OCI-LY7 (cell line): ENCODE measurements at regions of chr7 and their contacts with region 1.

Region 1: GRCh38 chr7:107879400-107880035 is 11.5 kb upstream of the DLD start:
- DNase-seq: peak; percentile 63
- H3K4me3 ChIP-seq: no peak overlapping the region
- H3K27ac ChIP-seq: no peak overlapping the region
- H3K4me1 ChIP-seq: no peaks in the 10 kb centered on the region
- CTCF ChIP-seq: peak; percentile 97

Region 2: DNA sequence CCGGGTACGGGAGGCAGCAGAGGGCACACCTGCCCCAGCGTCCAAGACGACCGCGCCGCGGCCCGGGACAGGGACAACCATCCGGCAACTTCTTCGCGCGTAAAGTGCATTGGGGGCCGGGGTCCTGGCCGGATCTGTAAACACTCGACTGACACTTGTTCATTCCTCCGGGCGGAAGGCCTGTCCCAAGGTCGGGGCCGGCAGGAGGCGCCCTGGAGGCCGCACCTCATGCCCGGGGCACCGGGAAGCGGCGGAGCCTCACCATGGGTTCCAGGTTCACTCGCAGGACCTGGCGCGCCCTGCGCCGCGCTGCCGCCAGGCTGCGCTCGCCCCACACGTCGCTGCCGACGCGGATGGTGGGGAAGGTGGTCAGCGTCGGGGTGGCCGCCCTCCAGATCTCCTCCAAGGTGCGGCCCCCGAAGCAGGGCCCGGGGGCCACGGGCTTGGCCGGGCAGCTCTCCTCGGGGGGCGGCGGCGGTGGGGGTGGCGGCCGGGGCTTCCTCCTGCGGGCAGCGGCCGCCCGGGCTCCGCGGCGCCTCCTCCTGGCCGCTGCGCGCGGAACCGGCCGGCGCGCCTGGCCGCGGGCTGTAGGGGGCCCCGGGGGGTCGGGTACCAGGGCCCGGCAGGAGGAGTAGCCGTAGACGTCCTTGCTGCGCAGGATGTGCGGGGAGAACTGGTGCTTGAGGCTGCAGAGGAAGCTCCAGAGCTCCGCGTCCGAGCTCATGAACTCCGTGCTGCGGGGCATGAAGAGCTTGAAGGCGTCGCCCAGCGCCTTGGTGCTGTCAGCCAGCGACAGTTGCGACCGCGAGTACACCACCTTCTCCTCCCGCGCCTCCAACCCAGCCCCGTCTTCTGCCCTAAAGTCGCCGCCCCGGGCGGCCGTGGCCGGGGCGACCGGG is 1219.3 kb before region 1 on chr7:
- CTCF ChIA-PET with region 1: no interaction called
- POLR2A ChIA-PET with region 1: no interaction called
- intact Hi-C with region 1: loop called (anchors 10 kb)
- DNase-seq: peak; percentile 89
- H3K4me3 ChIP-seq: peak overlapping the region; percentile 82
- H3K27ac ChIP-seq: peak overlapping the region; percentile 70
- H3K4me1 ChIP-seq: peaks cover 9% of the 10 kb centered on the region
- CTCF ChIP-seq: peak; percentile 83

Region 3: GRCh38 chr7:106947244-106947728 is 932.2 kb before region 1 on chr7:
- CTCF ChIA-PET with region 1: no interaction called
- POLR2A ChIA-PET with region 1: no interaction called
- intact Hi-C with region 1: loop called (anchors 10 kb)
- DNase-seq: peak; percentile 92
- H3K4me3 ChIP-seq: no peak overlapping the region
- H3K27ac ChIP-seq: no peak overlapping the region
- H3K4me1 ChIP-seq: peaks cover 18% of the 10 kb centered on the region
- CTCF ChIP-seq: peak; percentile 99

Region 4: DNA sequence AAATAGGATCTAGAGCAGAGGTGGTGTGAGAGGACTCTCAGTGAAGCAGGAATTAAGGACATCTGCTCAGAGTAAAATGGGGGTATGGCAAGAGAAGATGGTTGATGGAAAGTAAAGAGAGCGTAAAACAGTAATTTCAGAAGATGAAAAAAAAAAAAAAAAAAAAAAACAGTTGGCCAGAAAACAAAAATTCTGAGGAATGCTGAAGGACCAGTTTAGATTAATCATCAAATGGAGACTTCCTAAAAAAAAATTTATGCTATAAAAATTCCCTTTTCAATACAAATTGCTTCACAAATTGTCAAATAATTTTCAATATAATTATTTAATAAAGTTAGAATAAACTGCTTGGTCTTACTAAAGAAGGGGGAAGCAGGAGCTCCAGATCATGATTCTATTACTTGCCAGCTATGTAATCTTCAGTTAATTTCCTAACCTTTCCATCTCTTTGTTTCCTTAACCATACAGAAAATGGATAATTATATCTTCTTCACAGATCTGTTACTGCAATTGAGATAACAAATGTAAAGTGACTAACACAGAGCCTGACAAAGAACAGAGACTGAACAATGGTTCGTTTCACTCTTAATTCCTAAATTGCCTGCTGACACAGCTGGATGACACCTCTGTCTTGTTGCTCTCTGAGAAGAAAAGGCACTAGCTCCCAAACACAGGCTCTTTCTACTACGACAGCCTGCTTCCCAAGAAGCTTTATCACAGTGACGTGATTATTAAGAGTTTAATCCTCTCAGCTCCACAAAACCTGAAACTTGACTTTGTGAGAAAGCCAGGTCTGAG is 474.6 kb before region 1 on chr7:
- CTCF ChIA-PET with region 1: no interaction called
- POLR2A ChIA-PET with region 1: no interaction called
- intact Hi-C with region 1: no loop called
- DNase-seq: no peak
- H3K4me3 ChIP-seq: no peak overlapping the region
- H3K27ac ChIP-seq: no peak overlapping the region
- H3K4me1 ChIP-seq: no peaks in the 10 kb centered on the region
- CTCF ChIP-seq: no peak

Region 5: DNA sequence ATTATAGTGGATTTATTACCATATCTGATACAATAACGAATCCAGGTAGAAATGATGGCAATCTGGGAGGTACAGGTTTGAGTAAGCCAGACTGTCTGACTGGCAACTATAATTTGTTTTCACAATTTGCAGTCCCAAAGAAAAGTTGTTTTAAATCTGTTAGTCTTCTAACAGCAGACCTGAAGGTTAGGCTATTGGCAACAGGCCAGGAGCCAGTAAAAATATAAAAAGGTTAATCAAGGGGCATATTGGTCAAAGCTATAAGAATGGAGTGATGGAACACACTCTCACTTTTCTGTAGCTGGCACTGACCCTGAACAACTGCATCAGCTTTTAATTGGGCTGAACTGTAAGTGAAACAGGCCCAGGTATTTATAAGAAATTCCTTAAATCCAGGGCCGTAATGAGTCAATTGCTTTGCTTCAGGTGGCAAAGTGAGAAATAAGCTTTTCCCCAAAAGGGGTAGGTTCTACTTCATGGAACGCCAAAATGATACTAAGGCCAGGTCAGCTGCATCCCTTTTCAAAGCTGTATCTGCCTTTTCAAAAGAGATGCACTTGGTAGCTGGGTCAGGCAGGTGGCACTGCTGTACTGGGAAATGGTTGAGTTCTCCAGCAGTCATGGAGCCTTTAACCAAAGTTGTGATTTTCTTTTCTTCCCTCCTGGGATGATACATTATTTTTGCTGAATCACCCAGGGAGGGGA is 416.6 kb before region 1 on chr7:
- CTCF ChIA-PET with region 1: interaction called, 3 read pairs
- POLR2A ChIA-PET with region 1: interaction called, 3 read pairs
- intact Hi-C with region 1: loop called (anchors 5 kb)
- DNase-seq: peak; percentile 52
- H3K4me3 ChIP-seq: no peak overlapping the region
- H3K27ac ChIP-seq: no peak overlapping the region
- H3K4me1 ChIP-seq: no peaks in the 10 kb centered on the region
- CTCF ChIP-seq: peak; percentile 82

Region 6: DNA sequence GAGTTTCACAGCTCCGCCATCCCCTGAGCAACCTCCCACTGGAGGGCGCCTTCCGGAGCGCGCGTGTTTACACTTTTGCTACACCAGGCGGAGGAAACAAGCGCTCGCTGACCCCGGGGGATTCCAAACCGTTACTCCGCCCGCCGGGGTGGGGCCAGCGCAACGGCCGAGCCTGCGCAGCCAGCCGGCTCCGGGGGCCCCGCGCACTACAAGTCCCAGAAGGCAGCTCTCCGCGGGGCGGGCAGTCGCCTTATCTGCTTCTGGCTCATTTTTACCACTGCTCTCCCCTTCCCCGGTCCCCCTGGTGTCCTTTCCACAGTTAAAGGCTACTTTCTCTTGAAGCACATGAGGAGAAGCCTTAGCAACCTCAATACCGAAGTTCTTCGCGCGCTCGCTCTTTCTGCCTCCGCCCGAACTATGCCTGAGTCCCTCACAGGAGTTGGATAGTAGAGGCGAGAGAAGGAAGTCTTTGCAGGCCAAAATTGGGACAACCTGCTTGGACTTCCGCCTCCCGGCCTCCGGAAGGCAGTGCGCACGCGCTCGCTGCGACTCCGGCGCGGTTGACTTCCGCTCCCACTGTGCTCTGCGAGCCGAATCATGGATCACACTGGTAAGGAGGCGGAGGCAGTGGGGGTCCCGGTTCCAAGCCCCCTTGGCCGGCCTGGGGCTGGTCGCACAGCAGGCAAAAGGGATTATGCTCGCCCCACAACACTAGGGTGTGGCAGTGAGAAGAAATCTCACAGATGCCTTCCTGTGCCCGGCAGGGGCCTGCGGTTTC is 135.8 kb before region 1 on chr7 and contains the start of gene CBLL1:
- CTCF ChIA-PET with region 1: interaction called, 6 read pairs
- POLR2A ChIA-PET with region 1: interaction called, 6 read pairs
- intact Hi-C with region 1: loop called (anchors 5 kb)
- DNase-seq: peak; percentile 97
- H3K4me3 ChIP-seq: peak within 1 kb of the TSS; percentile 90
- H3K27ac ChIP-seq: peak within 1 kb of the TSS; percentile 95
- H3K4me1 ChIP-seq: peaks cover 51% of the 10 kb centered on the region
- CTCF ChIP-seq: peak; percentile 81
- total RNA-seq, gene CBLL1: 22.9 and 25.7 TPM in 2 replicates

Region 7: GRCh38 chr7:108146070-108146837 is 266.7 kb after region 1 on chr7:
- CTCF ChIA-PET with region 1: no interaction called
- POLR2A ChIA-PET with region 1: no interaction called
- intact Hi-C with region 1: loop called (anchors 10 kb)
- DNase-seq: peak; percentile 60
- H3K4me3 ChIP-seq: no peak overlapping the region
- H3K27ac ChIP-seq: no peak overlapping the region
- H3K4me1 ChIP-seq: no peaks in the 10 kb centered on the region
- CTCF ChIP-seq: peak; percentile 85

Region 8: DNA sequence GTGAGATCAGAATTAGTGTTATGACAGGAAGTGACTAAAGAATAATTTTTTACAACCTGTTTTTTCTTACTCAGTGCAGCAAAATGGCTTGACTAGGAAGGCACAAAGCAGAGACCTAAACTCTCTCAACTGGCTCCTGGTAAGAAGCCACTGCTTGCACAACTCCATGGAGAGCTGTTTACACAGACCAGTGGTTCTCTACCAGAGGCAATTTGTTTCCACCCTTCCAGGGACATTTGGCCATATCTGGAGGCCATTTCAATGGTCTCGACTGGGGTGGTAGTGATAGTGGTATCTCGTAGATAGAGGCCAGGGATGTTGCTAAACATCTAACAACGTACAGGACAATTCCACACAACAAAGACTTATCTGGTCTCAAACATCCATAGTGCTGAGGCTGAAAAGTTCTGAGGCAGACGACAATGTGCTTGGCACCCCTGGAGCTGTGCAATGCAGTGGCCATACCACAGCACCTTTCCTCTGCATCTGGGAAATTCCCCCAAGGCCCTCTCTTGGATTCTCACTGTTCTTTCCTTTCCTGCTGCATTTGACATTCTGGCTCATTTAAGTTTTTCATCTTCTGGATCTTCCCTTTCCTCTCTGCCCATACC is 356.0 kb after region 1 on chr7:
- CTCF ChIA-PET with region 1: no interaction called
- POLR2A ChIA-PET with region 1: no interaction called
- intact Hi-C with region 1: no loop called
- DNase-seq: no peak
- H3K4me3 ChIP-seq: no peak overlapping the region
- H3K27ac ChIP-seq: no peak overlapping the region
- H3K4me1 ChIP-seq: no peaks in the 10 kb centered on the region
- CTCF ChIP-seq: no peak